Activated naive CD4-positive, alpha-beta T cell treated with anti-CD3 and anti-CD28 coated beads for 36 hours (primary cell): ENCODE measurements at regions of chr1 and their contacts with region 1.

Region 1: GRCh38 chr1:223244366-223245103 is 101.5 kb upstream of the TLR5 start:
- DNase-seq: peak; percentile 58
- H3K4me3 Mint-ChIP-seq: no peak overlapping the region
- H3K27ac Mint-ChIP-seq: peak overlapping the region; percentile 69
- H3K4me1 Mint-ChIP-seq: peaks cover 45% of the 10 kb centered on the region
- H3K27me3 Mint-ChIP-seq: no peaks in the 10 kb centered on the region

Region 2: DNA sequence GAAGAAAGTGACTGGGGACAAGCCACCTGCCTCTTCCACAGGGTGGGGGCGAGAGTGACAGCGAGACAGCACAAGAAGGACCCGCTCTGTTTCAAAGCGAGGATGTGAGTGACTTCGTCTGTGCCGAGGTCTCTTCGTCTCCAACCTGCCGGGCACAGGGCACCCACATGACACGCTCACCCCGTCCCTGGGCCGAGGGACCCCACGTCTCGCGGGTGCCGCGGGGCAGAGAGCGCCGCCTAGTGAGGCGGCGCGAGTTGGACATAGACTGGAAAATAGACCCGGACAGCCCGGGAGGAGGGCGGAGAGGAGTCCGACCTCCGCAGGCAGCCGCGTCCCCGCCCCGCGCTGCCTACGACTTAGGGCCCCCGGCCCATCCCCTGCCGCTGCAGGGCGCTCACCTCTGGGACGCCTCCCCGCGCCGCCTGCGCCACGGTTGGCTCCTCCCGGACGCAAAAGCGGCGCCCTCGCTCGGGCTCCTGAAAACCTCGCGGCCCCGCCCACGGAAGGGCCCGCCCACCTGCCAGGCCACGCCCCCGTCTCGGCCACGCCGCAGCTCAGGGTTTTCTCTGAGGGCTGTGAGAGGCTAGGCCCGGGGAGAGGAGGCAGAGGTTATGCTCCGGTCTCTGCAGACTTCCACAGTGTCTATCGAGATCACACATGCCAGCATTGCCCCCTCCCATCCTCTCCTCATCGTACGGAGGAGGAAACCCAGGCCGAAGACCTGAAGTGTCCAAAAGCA is 101.6 kb before region 1 on chr1 and contains the start of gene TLR5:
- CTCF ChIA-PET with region 1: interaction called, 6 read pairs
- intact Hi-C with region 1: loop called (anchors 2 kb)
- DNase-seq: peak; percentile 93
- H3K4me3 Mint-ChIP-seq: peak within 1 kb of the TSS; percentile 72
- H3K27ac Mint-ChIP-seq: peak within 1 kb of the TSS; percentile 22
- H3K4me1 Mint-ChIP-seq: peaks cover 28% of the 10 kb centered on the region
- H3K27me3 Mint-ChIP-seq: no peaks in the 10 kb centered on the region
- total RNA-seq, gene TLR5: 0.67 to 0.93 TPM

Region 3: DNA sequence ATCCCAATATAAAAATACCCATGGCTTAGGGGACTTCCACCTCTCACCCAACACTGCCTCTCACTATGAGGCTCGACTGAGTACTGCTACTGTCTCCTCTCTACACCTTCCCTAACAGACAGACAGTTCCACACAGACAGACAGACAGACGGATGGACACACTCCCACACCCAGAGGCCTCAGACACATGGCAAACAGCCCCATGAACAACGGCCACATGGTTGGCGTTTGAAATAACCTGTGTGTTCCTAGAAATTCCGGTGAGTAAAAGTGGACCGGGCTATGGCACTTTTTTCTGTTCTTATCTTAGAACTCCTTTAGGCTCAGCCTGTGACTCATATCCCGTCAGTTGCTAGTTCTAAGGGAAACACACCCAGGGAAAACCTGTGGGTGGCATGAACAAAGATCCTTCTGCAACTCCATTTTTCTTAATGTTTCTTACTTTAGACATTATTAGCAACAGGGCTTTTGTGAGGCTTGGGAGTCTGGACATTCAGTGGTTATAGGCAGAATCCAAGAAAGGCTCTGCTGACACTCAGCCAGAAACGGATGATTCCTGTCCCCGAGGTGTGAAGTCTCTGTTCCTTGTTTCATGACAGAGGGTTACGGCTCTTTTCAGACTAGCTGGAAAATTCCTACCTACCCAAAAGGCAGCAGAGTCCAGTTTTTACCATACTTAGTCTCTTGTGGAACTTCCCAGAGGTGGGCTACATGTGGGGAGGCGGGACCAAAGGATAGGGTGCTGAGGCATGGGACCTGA is 10.9 kb before region 1 on chr1:
- CTCF ChIA-PET with region 1: interaction called, 3 read pairs
- intact Hi-C with region 1: loop called (anchors 1 kb)
- DNase-seq: peak; percentile 39
- H3K4me3 Mint-ChIP-seq: no peak overlapping the region
- H3K27ac Mint-ChIP-seq: peak overlapping the region; percentile 2
- H3K4me1 Mint-ChIP-seq: peaks cover 63% of the 10 kb centered on the region
- H3K27me3 Mint-ChIP-seq: no peaks in the 10 kb centered on the region

Region 4: GRCh38 chr1:223358826-223359225 is 114.3 kb after region 1 on chr1:
- CTCF ChIA-PET with region 1: no interaction called
- intact Hi-C with region 1: loop called (anchors 1 kb)
- DNase-seq: peak; percentile 24
- H3K4me3 Mint-ChIP-seq: no peak overlapping the region
- H3K27ac Mint-ChIP-seq: no peak overlapping the region
- H3K4me1 Mint-ChIP-seq: peaks cover 17% of the 10 kb centered on the region
- H3K27me3 Mint-ChIP-seq: peaks cover 5% of the 10 kb centered on the region